ENCODE measurements at regions of chr9 and their contacts with region 1.

Region 1: GRCh38 chr9:136138566-136138965 is 19.9 kb upstream of the TMEM250 start:
- DNase-seq: peak in 1 of 2 experiments; percentile 69
- ATAC-seq: peak in 1 of 2 experiments; percentile 22; a peak in 2 of 6 replicates
- H3K4me3 ChIP-seq: no peak overlapping the region
- H3K27ac ChIP-seq: no peak overlapping the region
- H3K4me1 ChIP-seq: peaks cover 4% of the 10 kb centered on the region; the same call in 2 of the 3 replicates
- CTCF ChIP-seq: peak; percentile 29; the same call in 1 of the 3 replicates
- EP300 ChIP-seq: no peak
- POLR2A ChIP-seq: no peak
- RAD21 ChIP-seq: peak in 1 of 2 experiments; percentile 44; a peak in 1 of 5 replicates

Region 2: DNA sequence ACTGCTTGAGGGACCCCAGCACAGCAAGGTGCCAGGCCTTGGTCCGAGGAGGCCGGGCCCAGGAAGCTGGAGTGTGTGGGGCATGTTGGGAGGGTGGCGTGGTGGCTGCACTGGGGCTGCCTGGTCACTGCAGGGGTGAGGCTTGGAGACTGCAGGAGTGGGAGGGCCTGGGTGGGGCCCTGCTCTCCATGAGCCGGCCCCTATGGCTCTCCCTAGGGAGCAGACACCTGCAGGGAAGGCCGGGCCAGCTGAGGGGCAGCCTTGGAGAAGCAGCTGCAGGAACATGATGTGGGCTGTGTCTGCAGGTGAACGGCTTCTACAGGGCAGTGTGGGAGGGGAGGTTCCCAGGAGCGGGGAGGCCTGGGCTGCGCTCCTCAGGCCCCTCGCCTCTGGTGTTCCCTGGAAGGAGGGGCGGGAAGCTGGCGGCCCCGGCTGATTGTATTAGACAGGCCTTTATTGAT is 21.8 kb after region 1 on chr9:
- CTCF ChIA-PET with region 1: interaction called, 10 read pairs
- POLR2A ChIA-PET with region 1: no interaction called
- DNase-seq: no peak
- ATAC-seq: peak in 1 of 2 experiments; percentile 31; a peak in 3 of 6 replicates
- H3K4me3 ChIP-seq: no peak overlapping the region
- H3K27ac ChIP-seq: no peak overlapping the region
- H3K4me1 ChIP-seq: no peaks in the 10 kb centered on the region
- CTCF ChIP-seq: no peak
- EP300 ChIP-seq: no peak
- POLR2A ChIP-seq: no peak
- RAD21 ChIP-seq: no peak

Region 3: GRCh38 chr9:136297016-136297691 is 158.6 kb after region 1 on chr9:
- CTCF ChIA-PET with region 1: interaction called, 10 read pairs
- POLR2A ChIA-PET with region 1: no interaction called
- DNase-seq: no peak
- ATAC-seq: peak; percentile 21 to 34; a peak in 2 of 6 replicates
- H3K4me3 ChIP-seq: no peak overlapping the region
- H3K27ac ChIP-seq: no peak overlapping the region
- H3K4me1 ChIP-seq: no peaks in the 10 kb centered on the region
- CTCF ChIP-seq: no peak
- EP300 ChIP-seq: no peak
- POLR2A ChIP-seq: no peak
- RAD21 ChIP-seq: no peak

Region 4: GRCh38 chr9:136671646-136672430 is 533.3 kb after region 1 on chr9:
- CTCF ChIA-PET with region 1: no interaction called
- POLR2A ChIA-PET with region 1: no interaction called
- DNase-seq: peak in 1 of 2 experiments; percentile 78
- ATAC-seq: peak in 1 of 2 experiments; percentile 63; a peak in 3 of 6 replicates
- H3K4me3 ChIP-seq: no peak overlapping the region
- H3K27ac ChIP-seq: peak overlapping the region in 1 of 2 experiments; percentile 47; a peak in 1 of 6 replicates
- H3K4me1 ChIP-seq: peaks cover 48% of the 10 kb centered on the region
- CTCF ChIP-seq: peak; percentile 66
- EP300 ChIP-seq: no peak
- POLR2A ChIP-seq: no peak
- RAD21 ChIP-seq: peak; percentile 27 to 31; a peak in 3 of 5 replicates

Measured in A549 (cell line).